Endothelial cell of umbilical vein (primary cell): ENCODE measurements at regions of chr6 and their contacts with region 1.

Region 1: GRCh38 chr6:159862103-159862502 is 28.7 kb upstream of the MAS1 start:
- DNase-seq: no peak
- H3K4me3 ChIP-seq: no peak overlapping the region
- H3K27ac ChIP-seq: no peak overlapping the region
- H3K4me1 ChIP-seq: no peaks in the 10 kb centered on the region
- H3K27me3 ChIP-seq: no peaks in the 10 kb centered on the region
- CTCF ChIP-seq: no peak
- POLR2A ChIP-seq: no peak

Region 2: GRCh38 chr6:159422041-159422984 is 439.8 kb before region 1 on chr6:
- CTCF ChIA-PET with region 1: no interaction called
- POLR2A ChIA-PET with region 1: no interaction called
- dilution Hi-C with region 1: no loop called
- intact Hi-C with region 1: no loop called
- DNase-seq: no peak
- H3K4me3 ChIP-seq: no peak overlapping the region
- H3K27ac ChIP-seq: no peak overlapping the region
- H3K4me1 ChIP-seq: no peaks in the 10 kb centered on the region
- H3K27me3 ChIP-seq: no peaks in the 10 kb centered on the region
- CTCF ChIP-seq: no peak
- POLR2A ChIP-seq: no peak

Region 3: DNA sequence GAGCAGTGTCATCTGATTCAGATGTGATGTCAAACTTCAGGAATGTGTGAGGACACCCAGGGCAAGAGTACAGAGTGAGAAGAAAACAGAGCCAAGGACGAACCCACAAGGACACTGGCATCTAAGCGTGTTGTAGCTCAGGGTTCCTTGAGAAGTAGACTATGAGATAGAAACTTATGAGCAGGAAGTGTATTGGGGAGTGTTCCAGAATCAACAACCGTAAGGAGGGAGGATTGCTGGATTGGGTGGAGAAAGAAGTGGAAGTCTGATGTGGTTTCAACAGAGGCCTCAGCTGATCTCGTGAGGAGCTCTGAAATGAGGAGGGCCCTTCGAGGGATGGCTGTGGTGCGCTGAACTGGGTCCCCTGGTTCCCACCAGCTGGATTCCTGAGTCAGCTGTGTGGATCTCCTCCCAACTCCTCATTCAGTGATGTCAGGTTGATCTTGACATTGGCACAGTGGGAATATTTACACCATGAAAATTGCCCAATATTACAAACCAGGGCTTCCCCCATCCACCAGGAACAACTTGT is 81.1 kb after region 1 on chr6:
- CTCF ChIA-PET with region 1: interaction called, 10 read pairs
- POLR2A ChIA-PET with region 1: no interaction called
- dilution Hi-C with region 1: no loop called
- intact Hi-C with region 1: no loop called
- DNase-seq: no peak
- H3K4me3 ChIP-seq: no peak overlapping the region
- H3K27ac ChIP-seq: no peak overlapping the region
- H3K4me1 ChIP-seq: no peaks in the 10 kb centered on the region
- H3K27me3 ChIP-seq: no peaks in the 10 kb centered on the region
- CTCF ChIP-seq: no peak
- POLR2A ChIP-seq: no peak

Region 4: DNA sequence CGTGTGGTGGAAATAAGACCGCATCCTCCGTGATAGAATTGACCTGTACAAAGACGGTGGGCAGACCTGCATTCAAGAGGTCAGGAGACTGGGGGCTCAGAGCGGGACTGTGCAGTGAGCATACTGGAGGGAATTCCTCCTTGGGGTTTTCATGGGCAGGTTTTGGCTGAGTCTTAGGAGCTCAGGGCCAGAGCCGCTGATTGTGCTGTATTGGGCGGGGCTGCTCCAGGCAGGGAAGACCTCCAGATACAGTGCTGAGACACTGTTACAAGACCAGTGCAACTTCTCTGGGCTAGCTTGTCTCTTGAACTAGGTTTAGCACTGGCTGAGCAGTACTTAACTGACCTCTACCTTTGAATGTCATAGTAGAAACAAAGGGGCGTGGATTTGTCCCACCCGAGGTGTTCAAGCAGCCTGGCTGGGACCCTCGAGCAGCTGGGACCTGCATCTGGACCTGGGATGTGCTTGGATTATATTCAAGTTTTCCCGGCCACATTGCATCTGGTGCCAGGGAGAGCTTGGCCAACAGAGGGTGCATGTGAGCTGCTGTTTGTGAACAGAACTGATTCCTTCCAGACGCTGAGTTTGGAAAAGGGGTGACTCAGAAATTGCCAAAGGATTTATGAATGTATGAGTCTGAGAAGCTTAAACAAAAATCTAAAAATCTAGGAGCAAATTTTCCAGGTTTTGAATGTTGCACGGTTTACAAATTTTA is 226.1 kb after region 1 on chr6:
- CTCF ChIA-PET with region 1: interaction called, 30 read pairs
- POLR2A ChIA-PET with region 1: no interaction called
- dilution Hi-C with region 1: no loop called
- intact Hi-C with region 1: loop called (anchors 5 kb)
- DNase-seq: peak; percentile 44
- H3K4me3 ChIP-seq: no peak overlapping the region
- H3K27ac ChIP-seq: no peak overlapping the region
- H3K4me1 ChIP-seq: no peaks in the 10 kb centered on the region
- H3K27me3 ChIP-seq: no peaks in the 10 kb centered on the region
- CTCF ChIP-seq: peak; percentile 60 to 70
- POLR2A ChIP-seq: no peak

Region 5: DNA sequence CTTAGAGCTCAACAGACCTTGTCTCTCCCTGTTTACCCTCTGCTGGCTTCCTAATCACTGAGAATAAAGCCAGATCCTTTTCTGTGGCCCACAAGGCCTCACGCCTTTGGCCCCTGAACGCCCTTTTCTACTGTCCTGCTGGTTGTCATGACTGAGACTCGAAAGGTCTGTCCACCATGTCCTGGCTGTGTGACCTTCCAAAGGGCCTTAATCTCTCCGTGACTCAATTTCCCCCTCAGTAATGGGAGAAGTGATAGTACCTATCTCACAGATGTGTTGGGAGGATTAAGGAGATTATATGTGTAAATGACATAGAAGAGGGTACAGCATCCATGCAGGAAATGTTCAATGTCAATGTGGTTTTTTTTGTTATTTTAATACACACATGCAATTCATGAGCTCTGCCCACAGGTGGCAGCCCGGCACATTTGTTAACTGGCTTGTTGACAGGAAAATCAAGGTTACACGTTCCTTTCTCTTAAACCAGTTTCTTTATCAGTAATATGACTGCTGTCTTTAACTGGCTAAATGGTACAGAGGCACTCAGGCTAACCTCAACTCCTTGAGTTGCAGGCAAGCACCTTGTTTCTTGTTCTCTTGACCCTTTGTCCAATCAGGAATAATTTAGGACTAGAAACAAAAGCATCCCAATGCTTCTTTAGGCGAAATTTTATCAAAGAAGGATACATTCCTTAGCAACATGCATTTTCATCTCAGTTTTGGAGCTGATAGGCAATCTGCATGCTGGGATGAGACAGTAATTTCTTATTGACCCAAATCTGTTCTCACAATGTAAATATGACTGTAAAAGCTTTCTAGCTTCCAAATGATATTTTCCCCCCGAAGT is 276.1 kb after region 1 on chr6:
- CTCF ChIA-PET with region 1: interaction called, 14 read pairs
- POLR2A ChIA-PET with region 1: no interaction called
- dilution Hi-C with region 1: no loop called
- intact Hi-C with region 1: no loop called
- DNase-seq: peak; percentile 56
- H3K4me3 ChIP-seq: no peak overlapping the region
- H3K27ac ChIP-seq: no peak overlapping the region
- H3K4me1 ChIP-seq: no peaks in the 10 kb centered on the region
- H3K27me3 ChIP-seq: no peaks in the 10 kb centered on the region
- CTCF ChIP-seq: peak; percentile 49 to 59
- POLR2A ChIP-seq: no peak

Region 6: GRCh38 chr6:160520043-160520904 is 658.2 kb after region 1 on chr6:
- CTCF ChIA-PET with region 1: interaction called, 24 read pairs
- POLR2A ChIA-PET with region 1: no interaction called
- dilution Hi-C with region 1: no loop called
- intact Hi-C with region 1: no loop called
- DNase-seq: peak; percentile 25
- H3K4me3 ChIP-seq: peak overlapping the region; percentile 18 to 55 (median 41)
- H3K27ac ChIP-seq: no peak overlapping the region
- H3K4me1 ChIP-seq: peaks cover 4% of the 10 kb centered on the region
- H3K27me3 ChIP-seq: peaks cover 0 to 8% of the 10 kb centered on the region in 2 experiments
- CTCF ChIP-seq: peak; percentile 80 to 91
- POLR2A ChIP-seq: no peak

Region 7: GRCh38 chr6:160766989-160767660 is 905.0 kb after region 1 on chr6:
- CTCF ChIA-PET with region 1: interaction called, 10 read pairs
- POLR2A ChIA-PET with region 1: no interaction called
- dilution Hi-C with region 1: no loop called
- intact Hi-C with region 1: no loop called
- DNase-seq: peak; percentile 9
- H3K4me3 ChIP-seq: no peak overlapping the region
- H3K27ac ChIP-seq: no peak overlapping the region
- H3K4me1 ChIP-seq: no peaks in the 10 kb centered on the region
- H3K27me3 ChIP-seq: no peaks in the 10 kb centered on the region
- CTCF ChIP-seq: peak; percentile 60 to 62
- POLR2A ChIP-seq: no peak